ENCODE measurements at regions of chr19 and their contacts with region 1.

Region 1: DNA sequence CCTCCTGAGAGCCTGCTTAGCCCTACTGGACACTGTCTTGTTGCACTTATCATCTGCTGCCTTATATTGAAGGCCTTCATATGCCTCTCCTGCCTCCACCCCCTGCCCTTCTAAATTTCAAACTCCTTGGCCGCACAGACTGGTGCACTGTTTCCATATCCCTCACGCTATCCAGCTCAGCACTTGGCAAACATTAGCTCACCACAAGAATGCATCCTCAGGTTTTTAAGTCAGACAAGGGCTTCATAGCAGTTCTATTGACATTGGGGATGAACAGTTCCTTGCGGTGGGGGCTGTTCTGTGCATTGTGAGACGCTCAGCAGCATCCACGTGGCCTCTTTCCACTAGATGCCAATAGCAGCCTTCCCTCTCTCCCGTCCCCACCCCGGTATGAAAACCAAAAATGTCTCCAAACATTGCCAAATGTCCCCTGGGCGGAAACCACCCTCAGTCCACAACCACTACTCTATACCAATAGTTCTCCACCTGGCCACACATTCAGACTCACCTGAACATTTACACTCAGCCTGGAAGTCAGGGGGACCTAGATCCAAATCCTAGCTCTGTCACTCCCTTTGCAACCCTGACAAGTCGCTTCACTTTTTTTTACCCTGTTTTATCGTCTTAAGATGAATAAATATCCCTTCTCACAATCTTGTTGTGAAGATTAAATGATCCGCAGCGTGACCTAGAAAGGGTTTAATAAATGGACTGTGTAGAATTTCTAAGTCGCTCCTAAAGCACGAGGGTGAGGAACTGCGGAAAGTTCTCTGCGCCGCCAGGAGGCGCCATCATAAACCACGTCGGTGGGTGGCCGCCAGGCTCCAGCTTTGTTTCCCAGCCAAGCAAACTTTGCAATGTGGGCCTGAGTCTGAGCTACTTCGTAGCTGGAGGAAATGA is 3.6 kb upstream of the CEACAM3 start:
- DNase-seq: peak; percentile 38
- H3K4me3 Mint-ChIP-seq: no peak overlapping the region
- H3K27ac Mint-ChIP-seq: no peak overlapping the region
- H3K4me1 Mint-ChIP-seq: peaks cover 2% of the 10 kb centered on the region
- H3K27me3 Mint-ChIP-seq: peaks cover 36% of the 10 kb centered on the region

Region 2: DNA sequence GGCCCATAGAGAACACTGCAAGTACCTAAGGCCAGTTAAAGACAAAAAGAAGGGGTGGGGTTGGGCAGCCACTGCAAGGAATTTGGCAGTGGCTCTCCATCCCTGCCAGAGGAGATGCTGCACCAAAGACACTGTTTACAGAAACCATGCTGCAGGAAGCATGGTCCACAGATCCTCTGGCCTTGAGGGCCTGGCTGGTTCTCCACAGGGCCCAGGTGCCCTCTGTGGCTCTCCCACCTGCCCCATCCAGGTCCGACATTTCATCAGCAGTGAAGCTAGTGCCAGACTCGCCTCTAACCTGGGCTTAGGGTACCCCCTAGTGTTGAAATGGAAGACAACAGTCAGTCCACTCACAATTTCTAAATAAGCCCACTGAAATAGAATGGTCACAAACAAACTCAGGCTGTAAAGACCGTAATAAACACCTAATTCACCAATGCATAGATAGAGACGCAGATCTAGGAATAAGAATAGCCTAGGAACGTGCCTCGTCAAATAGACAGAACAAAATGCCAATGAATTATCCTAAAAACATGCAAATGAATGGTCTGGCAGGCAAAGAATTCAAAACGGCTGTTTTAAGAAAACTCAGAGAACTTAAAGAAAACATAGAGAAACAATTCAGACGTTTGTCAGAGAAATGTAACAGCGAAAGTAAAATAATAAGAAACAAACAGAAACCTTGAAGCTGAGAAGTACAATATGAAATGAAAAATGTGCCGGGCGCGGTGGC is 28.4 kb after region 1 on chr19:
- intact Hi-C with region 1: loop called (anchors 1 kb)
- DNase-seq: peak; percentile 30
- H3K4me3 Mint-ChIP-seq: no peak overlapping the region
- H3K27ac Mint-ChIP-seq: no peak overlapping the region
- H3K4me1 Mint-ChIP-seq: no peaks in the 10 kb centered on the region
- H3K27me3 Mint-ChIP-seq: peaks cover 20% of the 10 kb centered on the region

Region 3: DNA sequence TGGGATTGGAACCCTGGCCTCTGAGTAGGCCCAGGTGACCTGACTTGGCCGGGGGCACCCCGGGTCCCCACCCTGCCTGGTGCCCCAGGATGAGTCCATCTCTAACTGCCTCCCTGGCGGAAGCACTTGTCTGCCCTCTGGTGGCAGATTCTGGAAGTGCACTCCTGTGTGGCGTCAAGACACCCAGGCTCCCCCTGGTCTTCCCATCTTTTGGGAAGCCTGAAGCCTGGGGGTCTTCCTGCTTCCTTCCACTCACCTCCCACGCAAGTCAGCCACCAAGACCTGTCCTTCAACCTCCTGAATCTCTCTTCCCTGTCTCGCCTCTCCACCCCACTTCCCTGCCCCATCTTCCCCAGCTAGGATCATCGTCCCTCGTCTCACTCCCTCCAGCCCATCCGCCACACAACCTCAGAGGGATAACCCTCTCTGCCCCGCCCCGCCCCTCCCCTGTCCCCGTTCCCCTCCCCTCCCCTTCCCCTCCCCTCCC is 159.0 kb after region 1 on chr19:
- intact Hi-C with region 1: loop called (anchors 5 kb)
- DNase-seq: peak; percentile 75
- H3K4me3 Mint-ChIP-seq: no peak overlapping the region
- H3K27ac Mint-ChIP-seq: peak overlapping the region; percentile 14
- H3K4me1 Mint-ChIP-seq: peaks cover 18% of the 10 kb centered on the region
- H3K27me3 Mint-ChIP-seq: no peaks in the 10 kb centered on the region

Measured in activated T-helper 2 cell treated with anti-CD3 and anti-CD28 coated beads, Interferon-gamma antibody, Interleukin-2, Interleukin-4, amounts not matched to agents 10 μg/mL and 5 μg/mL and 100 μg/mL, durations not matched to agents 14 hours and 24 hours and 36 hours (primary cell).